Activated T-helper 1 cell treated with anti-CD3 and anti-CD28 coated beads, Interleukin-12 subunit alpha, Interleukin-12 subunit beta, Interleukin-2, Interleukin-4 antibody, amounts not matched to agents 30 ng/mL and 10 ng/mL and 1 ng/mL, durations not matched to agents 14 hours and 24 hours and 36 hours (primary cell): ENCODE measurements at regions of chr6 and their contacts with region 1.

Region 1: DNA sequence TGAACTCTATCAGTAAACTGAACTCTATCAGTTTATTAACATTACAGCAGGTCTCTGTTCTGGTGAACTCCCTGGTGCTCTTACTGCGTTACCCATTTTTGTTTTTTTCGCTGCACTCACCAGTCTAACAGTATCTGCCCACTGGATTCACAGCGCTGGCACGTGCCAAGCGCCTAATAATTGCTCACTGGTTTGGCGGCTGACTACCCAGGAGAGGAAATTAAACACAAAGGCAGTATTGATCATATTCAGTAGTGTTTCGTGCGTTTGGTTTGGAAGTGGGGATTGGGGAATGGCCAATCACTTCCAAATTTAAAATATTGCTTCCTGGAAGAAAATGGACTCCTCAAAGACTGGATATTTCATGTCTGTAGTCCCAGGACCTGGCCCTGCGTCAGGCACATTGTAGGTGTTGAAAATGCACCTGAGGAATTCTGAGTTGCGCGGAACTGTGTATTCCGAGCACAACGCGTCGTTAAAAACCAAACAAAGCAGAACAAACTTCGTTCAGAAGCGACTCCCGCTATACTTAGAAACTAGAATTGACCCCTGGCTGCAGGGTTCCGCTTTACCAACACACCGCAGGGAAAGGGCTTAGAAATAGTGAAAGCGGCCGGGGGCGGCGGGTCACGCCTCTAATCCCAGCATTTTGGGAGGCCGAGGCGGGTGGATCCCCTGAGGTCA is 1.1 kb upstream of the RPS12 start:
- DNase-seq: no peak
- H3K4me3 Mint-ChIP-seq: peak overlapping the region; percentile 89
- H3K27ac Mint-ChIP-seq: peak overlapping the region; percentile 90
- H3K4me1 Mint-ChIP-seq: peaks cover 42% of the 10 kb centered on the region
- H3K27me3 Mint-ChIP-seq: peaks cover 16% of the 10 kb centered on the region

Region 2: GRCh38 chr6:131627724-131628682 is 1185.3 kb before region 1 on chr6 and contains the start of gene MED23:
- intact Hi-C with region 1: loop called (anchors 2 kb)
- DNase-seq: peak; percentile 92
- H3K4me3 Mint-ChIP-seq: peak within 1 kb of the TSS; percentile 99
- H3K27ac Mint-ChIP-seq: peak within 1 kb of the TSS; percentile 94
- H3K4me1 Mint-ChIP-seq: peaks cover 36% of the 10 kb centered on the region
- H3K27me3 Mint-ChIP-seq: no peaks in the 10 kb centered on the region
- total RNA-seq, gene MED23: 34.0 and 36.3 TPM in 2 replicates

Region 3: DNA sequence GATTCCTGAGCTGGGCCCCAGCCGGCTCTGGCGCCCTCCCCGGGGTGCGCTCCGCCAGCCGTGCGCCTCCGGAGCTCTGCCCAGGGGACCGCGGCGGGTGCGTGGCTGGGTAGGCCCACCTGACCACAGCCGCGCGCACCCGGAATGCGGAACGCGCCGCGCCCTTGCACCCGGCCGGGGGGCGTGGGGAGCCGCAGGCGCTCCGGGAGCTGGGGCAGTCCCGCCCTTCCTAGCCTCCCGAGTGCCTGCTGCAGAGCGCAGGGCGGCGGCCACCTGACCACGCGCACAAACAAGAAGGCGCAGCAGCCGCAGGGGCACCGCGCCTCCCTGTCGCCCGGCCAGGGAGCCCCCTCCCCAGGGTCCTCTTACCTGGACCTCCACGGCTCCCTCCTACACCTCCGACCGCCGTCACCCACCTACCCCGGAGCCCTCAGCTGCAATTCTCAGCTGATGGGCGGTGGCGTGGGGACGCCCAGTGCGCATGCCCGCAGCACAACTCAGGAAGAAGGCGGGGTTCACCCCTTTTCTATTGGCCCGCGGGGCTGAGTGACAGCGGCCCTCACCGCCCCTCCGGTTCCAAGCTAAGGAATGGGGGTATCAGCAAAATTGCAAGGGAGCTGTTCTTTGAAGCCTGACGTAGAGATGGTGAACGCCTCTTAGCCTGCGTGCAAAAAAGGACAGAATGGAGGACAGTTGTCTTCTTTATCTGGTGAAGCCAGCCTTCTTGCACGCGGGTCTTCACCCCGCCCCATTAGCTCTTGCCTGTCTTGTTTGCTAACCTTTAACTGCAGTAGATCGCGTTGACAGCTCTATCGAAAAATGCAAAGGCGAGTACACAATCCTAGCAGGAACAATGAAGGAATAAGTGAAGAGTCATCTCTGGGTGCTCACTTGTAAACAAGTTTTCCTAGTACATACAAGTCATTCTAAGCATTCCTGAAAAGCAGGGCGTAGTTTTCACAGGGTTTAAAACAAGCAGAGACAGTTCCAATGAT is 300.4 kb before region 1 on chr6 and contains the start of gene STX7:
- intact Hi-C with region 1: loop called (anchors 1 kb)
- DNase-seq: peak; percentile 83
- H3K4me3 Mint-ChIP-seq: peak within 1 kb of the TSS; percentile 97
- H3K27ac Mint-ChIP-seq: peak within 1 kb of the TSS; percentile 93
- H3K4me1 Mint-ChIP-seq: peaks cover 25% of the 10 kb centered on the region
- H3K27me3 Mint-ChIP-seq: peaks cover 20% of the 10 kb centered on the region
- total RNA-seq, gene STX7: 17.3 and 17.5 TPM in 2 replicates

Region 4: DNA sequence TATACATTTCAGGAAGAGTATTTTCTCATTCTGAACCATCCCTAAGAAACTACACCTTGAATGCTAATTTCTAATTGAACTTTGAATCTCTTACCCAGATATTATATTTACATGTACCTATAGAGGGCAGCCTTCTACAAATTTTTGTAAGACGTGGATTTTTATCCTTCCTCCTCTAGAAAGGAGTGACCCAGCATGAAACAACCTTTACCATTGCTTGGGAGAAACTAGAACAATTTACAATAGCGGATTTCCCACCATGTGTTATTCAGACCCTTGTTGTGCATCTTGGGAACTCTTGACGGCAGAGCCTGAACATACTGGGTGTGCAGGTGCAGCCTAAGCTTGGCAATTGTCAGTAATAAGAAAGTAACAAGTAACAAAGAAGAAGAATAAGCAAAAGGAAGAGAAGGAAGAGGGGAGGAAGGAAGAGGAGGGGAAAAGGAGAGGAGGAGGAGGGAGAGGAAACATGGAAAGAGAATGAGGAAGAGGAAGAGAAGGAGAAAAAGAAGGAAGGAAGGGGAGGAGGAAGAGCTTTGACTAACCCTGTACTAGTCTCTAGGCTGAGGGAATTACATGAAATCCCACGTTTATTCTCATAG is 143.5 kb before region 1 on chr6:
- intact Hi-C with region 1: loop called (anchors 2 kb)
- DNase-seq: no peak
- H3K4me3 Mint-ChIP-seq: no peak overlapping the region
- H3K27ac Mint-ChIP-seq: no peak overlapping the region
- H3K4me1 Mint-ChIP-seq: peaks cover 7% of the 10 kb centered on the region
- H3K27me3 Mint-ChIP-seq: peaks cover 5% of the 10 kb centered on the region

Region 5: DNA sequence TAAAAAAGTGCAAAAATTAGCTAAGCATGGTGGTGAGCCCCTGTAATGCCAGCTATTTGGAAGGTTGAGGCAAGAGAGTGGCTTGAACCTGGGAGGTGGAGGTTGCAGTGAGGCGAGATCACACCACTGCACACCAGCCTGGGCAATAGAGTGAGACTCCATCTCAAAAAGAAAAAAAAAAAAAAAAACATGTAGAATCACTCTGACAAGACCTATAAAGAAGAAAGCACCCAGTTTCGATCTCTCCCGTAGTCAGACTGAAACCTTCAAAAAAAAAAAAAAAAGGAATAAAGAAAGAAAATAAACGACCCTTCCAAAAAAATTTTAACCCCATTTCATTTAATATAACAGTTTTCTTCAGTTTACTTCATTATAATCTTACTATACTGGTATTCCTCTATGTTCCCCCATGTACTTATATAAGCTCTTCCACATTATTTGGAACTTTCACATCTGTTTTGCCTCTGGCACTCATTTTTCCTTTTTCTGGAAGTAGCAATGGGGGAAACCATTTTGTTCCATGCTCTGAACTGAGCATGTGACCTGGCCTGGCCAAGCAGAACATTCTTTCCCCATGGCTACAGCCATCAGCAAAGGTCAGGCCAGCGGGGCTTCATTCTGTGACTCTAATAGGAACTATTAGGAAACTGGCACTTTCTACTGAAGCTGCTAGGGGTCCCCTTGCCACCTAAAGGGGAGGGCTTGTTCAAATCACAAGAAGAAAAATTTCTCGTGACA is 24.5 kb before region 1 on chr6:
- intact Hi-C with region 1: no loop called
- DNase-seq: no peak
- H3K4me3 Mint-ChIP-seq: no peak overlapping the region
- H3K27ac Mint-ChIP-seq: no peak overlapping the region
- H3K4me1 Mint-ChIP-seq: peaks cover 10% of the 10 kb centered on the region
- H3K27me3 Mint-ChIP-seq: no peaks in the 10 kb centered on the region

Region 6: DNA sequence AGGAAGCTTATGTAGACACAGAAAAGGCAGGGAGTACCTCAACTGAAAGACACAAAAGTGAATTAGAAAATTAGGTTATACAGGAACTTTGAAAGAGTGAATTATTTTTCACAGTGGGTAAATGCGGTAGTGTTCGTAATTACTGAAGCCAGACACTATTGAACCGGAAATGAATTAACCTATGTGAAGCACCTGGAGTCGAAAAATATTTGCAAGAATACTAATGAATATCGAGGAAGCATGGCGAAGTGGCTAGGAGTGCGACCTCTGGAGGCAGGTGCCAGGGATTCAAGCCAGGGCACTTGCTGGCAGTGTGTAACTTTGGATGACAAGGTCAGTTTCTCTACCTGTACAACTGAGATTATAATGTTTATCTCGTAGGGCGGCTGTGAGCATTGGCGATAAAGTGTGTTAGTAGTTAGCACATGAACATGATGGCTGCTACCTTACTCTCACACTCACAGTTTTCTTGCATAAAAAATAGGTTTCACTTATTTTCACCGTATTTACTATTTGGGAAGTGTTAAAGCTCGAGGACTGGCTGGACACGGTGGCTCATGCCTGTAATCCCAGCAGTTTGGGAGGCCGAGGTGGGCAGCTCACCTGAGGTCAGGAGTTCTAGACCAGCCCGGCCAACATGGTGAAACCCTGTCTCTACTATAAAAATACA is 14.3 kb before region 1 on chr6:
- intact Hi-C with region 1: loop called (anchors 1 kb)
- DNase-seq: peak; percentile 46
- H3K4me3 Mint-ChIP-seq: no peak overlapping the region
- H3K27ac Mint-ChIP-seq: peak overlapping the region; percentile 80
- H3K4me1 Mint-ChIP-seq: peaks cover 10% of the 10 kb centered on the region
- H3K27me3 Mint-ChIP-seq: peaks cover 8% of the 10 kb centered on the region